ENCODE measurements at regions of chr1 and their contacts with region 1.

Region 1: GRCh38 chr1:67274623-67275325 is 32.9 kb upstream of the IL12RB2 start:
- DNase-seq: peak; percentile 85
- H3K4me3 Mint-ChIP-seq: no peak overlapping the region
- H3K27ac Mint-ChIP-seq: peak overlapping the region; percentile 76
- H3K4me1 Mint-ChIP-seq: peaks cover 43% of the 10 kb centered on the region
- H3K27me3 Mint-ChIP-seq: no peaks in the 10 kb centered on the region

Region 2: GRCh38 chr1:67005068-67005467 is 269.7 kb before region 1 on chr1:
- intact Hi-C with region 1: no loop called
- DNase-seq: no peak
- H3K4me3 Mint-ChIP-seq: no peak overlapping the region
- H3K27ac Mint-ChIP-seq: no peak overlapping the region
- H3K4me1 Mint-ChIP-seq: no peaks in the 10 kb centered on the region
- H3K27me3 Mint-ChIP-seq: no peaks in the 10 kb centered on the region

Region 3: DNA sequence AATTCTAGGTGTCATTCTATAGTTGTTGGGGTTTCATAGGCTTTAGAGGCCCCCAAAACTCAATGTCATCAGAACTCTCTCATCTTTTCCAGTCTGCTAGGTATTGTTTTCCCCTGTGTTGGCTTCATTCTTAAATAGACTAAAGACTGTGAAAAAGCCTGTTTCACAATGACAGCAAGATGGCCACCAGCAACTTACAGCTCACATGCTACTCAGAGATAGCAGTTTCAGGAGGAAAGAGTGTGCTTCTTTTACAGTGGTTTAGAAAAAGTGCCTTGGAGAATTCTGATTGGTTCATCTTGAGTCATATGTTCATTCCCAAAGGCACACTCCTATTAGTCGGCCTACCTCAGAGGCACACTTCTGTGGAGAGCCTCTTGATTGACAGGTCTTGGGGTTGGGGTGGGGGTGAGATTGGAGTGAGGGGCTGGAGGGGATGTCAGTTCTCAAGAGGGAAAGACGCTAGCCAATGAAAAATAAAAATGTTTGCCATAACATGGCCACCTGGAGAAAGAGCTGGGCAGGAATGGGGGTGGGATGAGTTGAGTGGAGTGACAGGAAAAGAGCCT is 100.0 kb before region 1 on chr1:
- intact Hi-C with region 1: loop called (anchors 1 kb)
- DNase-seq: no peak
- H3K4me3 Mint-ChIP-seq: peak overlapping the region; percentile 42
- H3K27ac Mint-ChIP-seq: peak overlapping the region; percentile 95
- H3K4me1 Mint-ChIP-seq: peaks cover 48% of the 10 kb centered on the region
- H3K27me3 Mint-ChIP-seq: no peaks in the 10 kb centered on the region

Region 4: DNA sequence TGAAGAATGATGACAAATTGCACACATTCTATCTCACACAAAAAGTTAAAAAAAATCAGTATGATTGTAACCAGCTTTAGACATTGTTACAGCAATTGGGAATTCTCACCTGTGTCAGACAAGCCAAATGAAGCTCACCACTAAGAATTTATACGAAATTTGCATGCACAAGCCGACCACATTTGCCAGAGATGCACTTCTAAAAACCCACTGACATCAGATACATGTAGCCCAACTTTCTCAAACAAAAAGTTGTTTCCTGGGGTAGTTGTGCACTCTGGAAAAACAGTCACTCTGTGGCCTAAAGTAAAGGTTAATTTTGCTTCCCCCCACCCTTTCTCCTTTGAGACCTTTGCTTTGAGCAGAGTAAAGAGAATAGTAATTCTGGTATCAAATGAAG is 35.0 kb before region 1 on chr1:
- intact Hi-C with region 1: loop called (anchors 2 kb)
- DNase-seq: no peak
- H3K4me3 Mint-ChIP-seq: no peak overlapping the region
- H3K27ac Mint-ChIP-seq: no peak overlapping the region
- H3K4me1 Mint-ChIP-seq: peaks cover 8% of the 10 kb centered on the region
- H3K27me3 Mint-ChIP-seq: no peaks in the 10 kb centered on the region

Region 5: GRCh38 chr1:67307251-67308060 is 32.7 kb after region 1 on chr1 and contains the start of gene IL12RB2:
- intact Hi-C with region 1: loop called (anchors 1 kb)
- DNase-seq: peak; percentile 93
- H3K4me3 Mint-ChIP-seq: peak within 1 kb of the TSS; percentile 97
- H3K27ac Mint-ChIP-seq: peak within 1 kb of the TSS; percentile 100
- H3K4me1 Mint-ChIP-seq: peaks cover 64% of the 10 kb centered on the region
- H3K27me3 Mint-ChIP-seq: no peaks in the 10 kb centered on the region
- total RNA-seq, gene IL12RB2: 138 and 146 TPM in 2 replicates

Region 6: DNA sequence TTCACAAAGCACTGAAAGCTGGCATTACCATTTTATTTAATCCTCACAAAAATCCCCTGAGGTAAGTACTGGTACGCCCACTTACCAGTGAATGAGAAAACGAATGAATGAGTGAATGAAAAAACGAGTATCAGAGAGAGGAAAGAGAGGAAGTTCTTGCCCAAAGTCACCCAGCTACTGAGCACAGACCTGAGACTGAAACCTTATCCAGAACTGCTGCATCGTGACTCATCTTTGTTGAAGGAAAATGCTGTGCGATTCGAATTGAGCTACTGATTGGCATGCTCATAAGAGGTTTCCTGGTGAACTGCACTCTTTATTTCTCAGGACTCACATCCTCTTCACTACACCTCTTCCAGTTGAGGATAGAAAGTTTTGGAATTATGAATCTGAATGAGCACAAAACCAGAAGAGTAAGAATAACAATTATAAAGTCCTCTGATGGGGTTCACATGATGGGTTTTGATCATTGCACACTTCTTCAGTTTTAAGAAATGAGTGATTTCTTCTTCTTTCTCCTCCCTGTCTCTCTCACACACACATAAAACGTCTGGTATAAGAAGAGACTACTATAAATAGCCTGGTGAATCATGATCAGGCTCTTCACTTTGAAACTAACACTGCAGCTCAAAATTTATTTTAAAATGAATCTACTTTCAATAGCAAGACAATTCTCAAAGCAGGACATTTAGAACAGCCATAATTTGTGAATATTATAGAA is 65.0 kb after region 1 on chr1:
- intact Hi-C with region 1: loop called (anchors 1 kb)
- DNase-seq: peak; percentile 85
- H3K4me3 Mint-ChIP-seq: peak overlapping the region; percentile 68
- H3K27ac Mint-ChIP-seq: peak overlapping the region; percentile 94
- H3K4me1 Mint-ChIP-seq: peaks cover 77% of the 10 kb centered on the region
- H3K27me3 Mint-ChIP-seq: no peaks in the 10 kb centered on the region